Heart left ventricle (tissue), 16 donors: ENCODE measurements at regions of chr11 and their contacts with region 1.

Region 1: DNA sequence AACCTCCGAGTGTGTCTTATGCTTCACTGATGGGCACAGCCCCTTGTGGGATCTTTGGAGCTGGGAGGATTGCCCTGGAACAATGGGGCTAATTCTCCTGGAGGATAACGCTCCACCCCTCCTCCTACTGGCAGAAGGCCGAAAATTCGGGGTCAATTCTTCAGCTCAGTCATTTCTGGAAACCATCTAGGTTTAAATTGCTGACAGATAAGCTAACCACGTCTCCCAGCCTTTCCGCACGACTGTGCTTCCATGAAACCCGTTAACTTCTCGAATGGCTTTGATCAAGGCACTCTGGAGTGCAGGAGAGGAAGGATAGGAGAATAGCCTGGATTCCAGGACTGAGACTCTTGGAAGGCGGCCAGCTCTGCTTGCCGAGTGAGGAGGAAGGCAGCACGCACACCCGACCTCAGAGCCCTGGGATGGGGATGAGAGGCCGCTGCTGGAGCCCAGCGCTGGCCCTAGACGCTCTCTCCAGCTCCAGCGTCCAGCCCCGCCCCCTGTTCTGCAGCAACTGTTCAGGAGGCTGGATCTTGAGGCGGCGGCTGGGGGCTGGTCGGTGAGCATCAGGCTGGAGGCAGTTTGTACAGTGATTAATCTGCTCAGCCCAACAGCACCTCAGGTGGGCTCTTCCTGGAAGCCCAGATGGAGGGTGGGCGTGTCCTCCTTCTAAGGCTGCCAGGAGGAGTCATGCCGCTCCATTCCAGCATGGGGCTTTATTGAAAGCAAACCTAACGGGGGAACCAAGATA is 176.7 kb upstream of the NCAM1 start:
- DNase-seq: peak; percentile 68 to 91 (median 85)
- ATAC-seq: peak; percentile 63 to 83 (median 73)
- H3K4me3 ChIP-seq: peak overlapping the region in 9 of 12 donors; percentile 1 to 40 (median 27)
- H3K27ac ChIP-seq: peak overlapping the region; percentile 7 to 75 (median 56)
- H3K4me1 ChIP-seq: peaks cover 0 to 56% (median 34%) of the 10 kb centered on the region in 12 donors
- H3K27me3 ChIP-seq: no peaks in the 10 kb centered on the region
- CTCF ChIP-seq: peak in 2 of 12 donors; percentile 12 to 15
- POLR2A ChIP-seq: no peak

Region 2: GRCh38 chr11:112881461-112881860 is 97.0 kb after region 1 on chr11:
- intact Hi-C with region 1: loop called in 1 of 10 experiments (anchors 10 kb)
- DNase-seq: peak; percentile 77 to 90 (median 83)
- ATAC-seq: peak; percentile 87 to 96 (median 92)
- H3K4me3 ChIP-seq: peak overlapping the region in 11 of 12 donors; percentile 16 to 63 (median 44)
- H3K27ac ChIP-seq: peak overlapping the region in 11 of 12 donors; percentile 35 to 86 (median 71)
- H3K4me1 ChIP-seq: peaks cover 0 to 33% (median 8%) of the 10 kb centered on the region in 12 donors
- H3K27me3 ChIP-seq: no peaks in the 10 kb centered on the region
- CTCF ChIP-seq: no peak
- POLR2A ChIP-seq: peak in 1 of 2 donors; percentile 64

Region 3: DNA sequence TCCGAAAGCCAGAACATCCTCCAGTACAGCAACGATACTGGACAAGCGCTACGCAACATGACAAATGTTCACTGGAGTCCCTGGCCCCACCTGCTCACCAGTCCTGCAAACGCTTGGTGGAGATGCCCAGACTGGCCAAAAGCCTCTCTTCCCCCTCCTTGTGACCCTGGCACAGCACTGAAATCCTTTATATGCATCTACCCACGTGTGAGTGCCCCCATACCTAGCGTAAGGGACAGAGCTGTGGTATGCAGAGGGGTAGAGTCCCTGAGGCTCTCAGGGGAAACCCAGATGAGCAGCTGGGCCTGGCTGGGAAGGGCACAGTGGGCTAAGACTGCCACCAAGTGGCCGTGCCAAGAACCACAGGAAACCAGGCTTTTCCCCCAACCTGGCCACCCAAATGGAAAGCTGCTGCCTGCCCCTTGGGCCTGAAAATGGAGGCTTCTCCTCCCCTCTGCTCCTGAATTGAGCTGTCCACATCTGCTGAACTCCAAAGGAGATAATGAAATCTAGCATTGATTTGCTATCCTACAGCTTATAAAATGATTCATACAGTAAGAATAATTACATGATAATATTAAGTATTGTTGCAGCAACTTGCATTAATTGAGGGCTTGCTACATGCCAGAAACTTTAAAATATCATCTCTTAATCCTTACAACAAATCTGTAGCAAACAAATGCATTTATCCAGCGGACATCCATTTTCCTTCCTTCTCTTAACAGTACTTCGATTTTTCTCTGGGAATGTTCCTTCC is 505.1 kb after region 1 on chr11:
- intact Hi-C with region 1: loop called in 1 of 10 experiments (anchors 10 kb)
- DNase-seq: peak; percentile 42 to 77 (median 54)
- ATAC-seq: peak; percentile 73 to 79 (median 77)
- H3K4me3 ChIP-seq: no peak overlapping the region
- H3K27ac ChIP-seq: no peak overlapping the region
- H3K4me1 ChIP-seq: peaks cover 0 to 9% (median 0%) of the 10 kb centered on the region in 12 donors
- H3K27me3 ChIP-seq: peaks cover 0 to 8% (median 0%) of the 10 kb centered on the region in 9 donors
- CTCF ChIP-seq: peak; percentile 79 to 93 (median 88)
- POLR2A ChIP-seq: no peak